Heart right ventricle (tissue), 16 donors: ENCODE measurements at regions of chr2 and their contacts with region 1.

Region 1: GRCh38 chr2:217886720-217887309 is 116.0 kb downstream of the TNS1 start:
- DNase-seq: peak; percentile 72 to 82
- ATAC-seq: peak in 7 of 8 donors; percentile 18 to 67 (median 47)
- H3K4me3 ChIP-seq: no peak overlapping the region
- H3K27ac ChIP-seq: peak overlapping the region in 7 of 10 donors; percentile 4 to 83 (median 57)
- H3K4me1 ChIP-seq: peaks cover 25 to 69% (median 57%) of the 10 kb centered on the region in 9 donors
- H3K27me3 ChIP-seq: no peaks in the 10 kb centered on the region
- CTCF ChIP-seq: peak; percentile 73 to 89 (median 81)

Region 2: DNA sequence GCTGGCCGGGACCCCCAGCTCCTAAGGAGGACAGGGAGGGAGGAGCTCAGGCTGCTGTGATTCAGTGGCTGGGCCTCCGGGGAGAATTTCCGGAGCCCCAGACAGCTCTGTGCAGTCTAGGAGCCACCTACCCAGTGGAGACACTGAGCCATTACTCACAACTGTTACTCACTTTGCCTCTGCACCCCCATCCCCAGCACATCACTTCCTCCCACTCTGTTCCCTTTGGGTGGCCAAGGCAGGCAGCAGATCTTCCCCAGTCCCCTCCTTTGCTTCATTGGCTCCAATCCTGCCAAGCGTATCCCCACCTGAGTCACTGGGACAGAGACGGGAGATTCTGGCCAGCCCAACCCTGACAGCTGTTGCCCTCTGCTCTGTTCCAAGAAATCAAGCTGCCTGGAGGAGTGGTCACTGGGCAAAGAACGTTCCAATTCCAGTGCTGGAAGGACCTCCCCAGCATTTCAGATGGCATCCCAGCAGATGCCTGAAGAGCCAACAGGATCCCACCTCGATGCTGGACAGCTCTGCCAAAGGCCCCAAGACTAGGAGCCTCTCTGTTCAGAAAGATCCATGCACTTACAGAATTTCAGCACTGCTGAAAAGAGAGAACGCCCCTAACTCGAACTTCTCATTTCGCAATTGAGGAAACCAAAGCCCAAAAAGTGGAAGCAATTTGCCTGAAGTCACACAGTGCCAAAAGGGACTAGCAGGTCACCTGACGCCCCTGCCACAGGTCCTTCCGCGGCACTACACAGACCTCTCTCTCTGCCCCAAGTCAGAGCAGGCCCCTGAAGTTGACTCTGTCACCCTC is 47.7 kb after region 1 on chr2:
- intact Hi-C with region 1: loop called in 1 of 10 experiments (anchors 10 kb)
- DNase-seq: peak in 1 of 2 donors; percentile 69
- ATAC-seq: peak; percentile 4 to 65 (median 19)
- H3K4me3 ChIP-seq: peak overlapping the region; percentile 7 to 98 (median 28)
- H3K27ac ChIP-seq: peak overlapping the region; percentile 84 to 99 (median 96)
- H3K4me1 ChIP-seq: peaks cover 91 to 100% (median 100%) of the 10 kb centered on the region in 9 donors
- H3K27me3 ChIP-seq: no peaks in the 10 kb centered on the region
- CTCF ChIP-seq: no peak

Region 3: GRCh38 chr2:217978536-217979165 is 91.8 kb after region 1 on chr2:
- intact Hi-C with region 1: loop called in 1 of 10 experiments (anchors 5 kb)
- DNase-seq: no peak
- ATAC-seq: peak; percentile 23 to 57 (median 38)
- H3K4me3 ChIP-seq: peak overlapping the region; percentile 36 to 70 (median 60)
- H3K27ac ChIP-seq: peak overlapping the region; percentile 67 to 90 (median 86)
- H3K4me1 ChIP-seq: peaks cover 20 to 94% (median 68%) of the 10 kb centered on the region in 9 donors
- H3K27me3 ChIP-seq: no peaks in the 10 kb centered on the region
- CTCF ChIP-seq: no peak

Region 4: DNA sequence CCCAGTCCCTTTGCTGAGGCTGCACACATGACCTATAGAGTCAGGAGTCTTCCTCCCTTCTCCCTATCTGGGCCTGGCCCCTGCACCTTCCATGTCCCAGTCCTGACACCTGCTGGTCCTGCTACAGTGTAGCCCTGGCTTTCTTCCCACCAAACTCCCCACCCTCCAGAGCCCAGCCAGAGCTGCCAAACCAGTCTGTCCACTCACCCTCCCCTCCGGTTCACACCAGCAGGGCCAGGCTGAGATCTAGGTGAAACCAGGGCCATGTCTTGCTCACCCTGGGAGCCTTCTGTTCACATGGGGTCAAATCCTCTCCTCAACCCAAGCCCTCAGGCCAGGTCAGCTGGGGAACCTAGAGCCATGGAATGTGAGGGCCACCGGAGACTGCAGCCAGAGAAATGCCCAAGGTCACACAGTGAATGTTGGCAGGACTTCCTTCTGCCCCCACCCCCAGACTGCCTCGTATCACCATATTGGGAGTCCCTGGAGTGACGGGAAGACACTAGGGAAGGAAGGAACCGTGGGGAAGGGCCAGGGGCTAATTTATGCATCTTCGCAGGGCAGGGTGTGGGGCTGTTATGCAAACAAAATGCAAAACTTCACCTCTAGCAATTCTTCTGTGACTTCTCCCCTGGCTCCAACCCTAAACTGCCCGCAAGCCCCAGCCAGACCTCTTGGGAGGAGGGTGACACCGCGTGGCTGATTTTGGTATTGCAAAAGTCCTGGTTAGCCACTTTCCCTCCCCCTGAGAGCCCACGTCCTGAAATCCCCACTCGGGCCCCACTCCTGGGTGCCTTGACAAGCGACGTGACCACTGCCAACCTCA is 101.4 kb after region 1 on chr2:
- intact Hi-C with region 1: loop called (anchors 1 to 5 kb)
- DNase-seq: peak; percentile 84 to 91
- ATAC-seq: peak; percentile 78 to 91 (median 88)
- H3K4me3 ChIP-seq: peak overlapping the region in 2 of 10 donors; percentile 9 to 10
- H3K27ac ChIP-seq: peak overlapping the region; percentile 19 to 90 (median 75)
- H3K4me1 ChIP-seq: peaks cover 13 to 63% (median 38%) of the 10 kb centered on the region in 9 donors
- H3K27me3 ChIP-seq: no peaks in the 10 kb centered on the region
- CTCF ChIP-seq: peak; percentile 83 to 92 (median 90)